ENCODE measurements at regions of chr3 and their contacts with region 1.

Region 1: GRCh38 chr3:112519424-112520001 is 20.2 kb upstream of the BTLA start:
- DNase-seq: peak; percentile 33 to 60 (median 59)
- H3K4me3 ChIP-seq: no peak overlapping the region
- H3K4me3 Mint-ChIP-seq: no peak overlapping the region
- H3K27ac ChIP-seq: no peak overlapping the region
- H3K27ac Mint-ChIP-seq: peak overlapping the region in 2 of 7 donors; percentile 2 to 28
- H3K4me1 ChIP-seq: no peaks in the 10 kb centered on the region
- H3K4me1 Mint-ChIP-seq: peaks cover 10% of the 10 kb centered on the region
- H3K27me3 ChIP-seq: no peaks in the 10 kb centered on the region
- H3K27me3 Mint-ChIP-seq: no peaks in the 10 kb centered on the region
- CTCF ChIP-seq: peak; percentile 69

Region 2: DNA sequence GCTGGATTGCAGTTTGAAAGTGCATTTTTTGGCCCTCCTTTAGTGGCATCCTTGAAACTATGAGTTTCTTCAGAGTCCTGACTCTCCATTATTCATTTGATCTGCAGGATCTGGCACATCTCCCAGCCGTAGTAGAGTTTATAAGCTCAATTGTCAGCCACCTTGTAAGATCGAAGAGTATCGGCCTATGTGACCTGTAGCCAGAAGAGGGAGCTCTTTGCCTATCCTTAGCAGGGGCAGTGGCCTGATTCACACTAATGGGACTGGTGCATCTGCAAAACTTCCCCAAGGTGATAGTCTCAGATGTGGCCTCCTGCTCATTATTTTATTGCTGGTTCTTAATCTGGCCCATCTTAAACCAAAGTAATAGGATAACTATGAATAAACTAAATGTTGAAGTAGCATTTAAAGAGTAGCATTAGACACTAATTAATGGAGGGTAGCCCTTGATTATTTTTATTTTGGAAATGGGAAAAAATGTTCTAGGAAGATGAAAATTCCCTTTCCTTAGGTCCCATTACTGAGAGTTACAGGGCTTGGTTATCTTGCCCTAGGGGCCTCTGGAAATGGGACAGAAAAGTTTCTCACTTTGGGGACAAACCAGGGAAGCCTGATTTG is 407.6 kb before region 1 on chr3:
- intact Hi-C with region 1: loop called in 1 of 2 experiments (anchors 5 kb)
- DNase-seq: peak; percentile 51 to 68 (median 60)
- H3K4me3 ChIP-seq: no peak overlapping the region
- H3K4me3 Mint-ChIP-seq: no peak overlapping the region
- H3K27ac ChIP-seq: no peak overlapping the region
- H3K27ac Mint-ChIP-seq: no peak overlapping the region
- H3K4me1 ChIP-seq: peaks cover 0 to 1% of the 10 kb centered on the region in 2 donors
- H3K4me1 Mint-ChIP-seq: peaks cover 6% of the 10 kb centered on the region
- H3K27me3 ChIP-seq: peaks cover 2 to 9% of the 10 kb centered on the region in 2 donors
- H3K27me3 Mint-ChIP-seq: peaks cover 9 to 24% (median 12%) of the 10 kb centered on the region in 3 donors
- CTCF ChIP-seq: peak; percentile 92

Region 3: GRCh38 chr3:112143251-112143650 is 376.3 kb before region 1 on chr3:
- intact Hi-C with region 1: no loop called
- DNase-seq: no peak
- H3K4me3 ChIP-seq: no peak overlapping the region
- H3K4me3 Mint-ChIP-seq: no peak overlapping the region
- H3K27ac ChIP-seq: no peak overlapping the region
- H3K27ac Mint-ChIP-seq: no peak overlapping the region
- H3K4me1 ChIP-seq: peaks cover 3 to 5% of the 10 kb centered on the region in 2 donors
- H3K4me1 Mint-ChIP-seq: peaks cover 6% of the 10 kb centered on the region
- H3K27me3 ChIP-seq: no peaks in the 10 kb centered on the region
- H3K27me3 Mint-ChIP-seq: no peaks in the 10 kb centered on the region
- CTCF ChIP-seq: no peak

Region 4: GRCh38 chr3:112280266-112280665 is 239.2 kb before region 1 on chr3:
- intact Hi-C with region 1: no loop called
- DNase-seq: no peak
- H3K4me3 ChIP-seq: no peak overlapping the region
- H3K4me3 Mint-ChIP-seq: no peak overlapping the region
- H3K27ac ChIP-seq: no peak overlapping the region
- H3K27ac Mint-ChIP-seq: no peak overlapping the region
- H3K4me1 ChIP-seq: no peaks in the 10 kb centered on the region
- H3K4me1 Mint-ChIP-seq: no peaks in the 10 kb centered on the region
- H3K27me3 ChIP-seq: no peaks in the 10 kb centered on the region
- H3K27me3 Mint-ChIP-seq: peaks cover 0 to 6% (median 1%) of the 10 kb centered on the region in 3 donors
- CTCF ChIP-seq: no peak

Region 5: DNA sequence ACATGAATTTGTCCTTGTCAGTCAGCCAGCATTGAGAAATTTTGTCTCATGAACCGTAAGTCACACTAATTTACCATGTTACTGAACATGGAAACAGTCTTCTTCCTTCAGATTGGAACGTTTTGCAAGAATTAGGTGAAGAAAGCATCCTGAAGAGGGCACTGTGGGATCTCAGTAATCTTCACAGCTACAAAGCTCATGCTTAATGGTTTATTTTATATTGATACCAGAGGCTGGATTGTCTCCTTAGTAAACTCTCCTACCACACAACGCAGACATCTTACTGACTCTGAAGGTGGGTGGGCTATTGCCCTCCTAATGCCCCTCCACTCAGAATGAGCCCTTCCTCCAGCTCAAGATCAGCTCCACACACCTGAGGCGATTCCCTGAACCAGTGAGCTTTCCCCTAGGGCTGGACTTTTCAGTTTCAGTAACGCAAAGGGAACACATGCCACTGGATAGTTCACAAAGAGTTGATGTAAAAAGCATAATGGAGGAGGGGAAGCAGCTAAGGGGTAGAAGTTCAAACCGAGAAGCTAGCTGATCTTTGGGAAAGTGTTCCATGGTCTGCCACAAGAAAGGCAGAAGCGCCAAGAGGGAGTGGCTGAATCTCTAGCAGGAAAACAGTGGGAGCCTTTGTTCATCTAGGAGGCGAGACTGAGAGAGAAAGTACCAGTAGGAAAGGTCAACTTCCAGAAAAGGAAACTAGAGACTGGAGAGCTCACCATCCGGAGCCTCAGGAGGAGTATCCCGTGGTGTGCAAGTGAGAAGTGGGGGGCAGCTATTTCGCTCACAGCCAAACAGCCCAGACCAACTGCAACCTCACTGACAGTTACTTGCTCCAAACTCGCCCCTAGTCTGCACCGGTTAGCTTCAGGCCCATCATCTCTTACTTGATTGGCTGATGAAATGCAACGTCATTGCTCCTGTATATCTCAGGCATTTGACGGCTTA is 225.9 kb before region 1 on chr3 and contains the start of gene SLC9C1:
- intact Hi-C with region 1: loop called in 1 of 2 experiments (anchors 10 kb)
- DNase-seq: peak; percentile 17 to 43 (median 39)
- H3K4me3 ChIP-seq: peak within 1 kb of the TSS; percentile 34 to 78 (median 47)
- H3K4me3 Mint-ChIP-seq: peak within 1 kb of the TSS; percentile 77 to 91
- H3K27ac ChIP-seq: peak within 1 kb of the TSS in 1 of 2 donors; percentile 58
- H3K27ac Mint-ChIP-seq: peak within 1 kb of the TSS in 4 of 7 donors; percentile 6 to 75 (median 11)
- H3K4me1 ChIP-seq: peaks cover 7 to 19% of the 10 kb centered on the region in 2 donors
- H3K4me1 Mint-ChIP-seq: peaks cover 23% of the 10 kb centered on the region
- H3K27me3 ChIP-seq: no peaks in the 10 kb centered on the region
- H3K27me3 Mint-ChIP-seq: peaks cover 0 to 3% (median 0%) of the 10 kb centered on the region in 3 donors
- CTCF ChIP-seq: peak; percentile 69
- polyA plus RNA-seq, gene SLC9C1: not detected

Region 6: GRCh38 chr3:112327371-112327951 is 192.1 kb before region 1 on chr3:
- intact Hi-C with region 1: loop called (anchors 5 kb)
- DNase-seq: peak; percentile 31 to 58 (median 58)
- H3K4me3 ChIP-seq: no peak overlapping the region
- H3K4me3 Mint-ChIP-seq: no peak overlapping the region
- H3K27ac ChIP-seq: no peak overlapping the region
- H3K27ac Mint-ChIP-seq: no peak overlapping the region
- H3K4me1 ChIP-seq: no peaks in the 10 kb centered on the region
- H3K4me1 Mint-ChIP-seq: peaks cover 5% of the 10 kb centered on the region
- H3K27me3 ChIP-seq: no peaks in the 10 kb centered on the region
- H3K27me3 Mint-ChIP-seq: peaks cover 0 to 5% (median 0%) of the 10 kb centered on the region in 3 donors
- CTCF ChIP-seq: peak; percentile 78

Region 7: GRCh38 chr3:112568642-112569041 is 49.1 kb after region 1 on chr3:
- intact Hi-C with region 1: no loop called
- DNase-seq: no peak
- H3K4me3 ChIP-seq: no peak overlapping the region
- H3K4me3 Mint-ChIP-seq: no peak overlapping the region
- H3K27ac ChIP-seq: peak overlapping the region in 1 of 2 donors; percentile 34
- H3K27ac Mint-ChIP-seq: no peak overlapping the region
- H3K4me1 ChIP-seq: peaks cover 26 to 28% of the 10 kb centered on the region in 2 donors
- H3K4me1 Mint-ChIP-seq: peaks cover 36% of the 10 kb centered on the region
- H3K27me3 ChIP-seq: no peaks in the 10 kb centered on the region
- H3K27me3 Mint-ChIP-seq: no peaks in the 10 kb centered on the region
- CTCF ChIP-seq: no peak

Region 8: GRCh38 chr3:112653209-112653871 is 133.8 kb after region 1 on chr3:
- intact Hi-C with region 1: no loop called
- DNase-seq: no peak
- H3K4me3 ChIP-seq: no peak overlapping the region
- H3K4me3 Mint-ChIP-seq: no peak overlapping the region
- H3K27ac ChIP-seq: no peak overlapping the region
- H3K27ac Mint-ChIP-seq: no peak overlapping the region
- H3K4me1 ChIP-seq: peaks cover 0 to 8% of the 10 kb centered on the region in 2 donors
- H3K4me1 Mint-ChIP-seq: peaks cover 6% of the 10 kb centered on the region
- H3K27me3 ChIP-seq: no peaks in the 10 kb centered on the region
- H3K27me3 Mint-ChIP-seq: peaks cover 0 to 2% (median 0%) of the 10 kb centered on the region in 3 donors
- CTCF ChIP-seq: no peak